ENCODE measurements at regions of chr15 and their contacts with region 1.

Region 1: GRCh38 chr15:74635228-74635627 is 19.6 kb downstream of the CLK3 start:
- DNase-seq: peak; percentile 71
- ATAC-seq: peak; percentile 69

Region 2: GRCh38 chr15:74373731-74374647 is 261.2 kb before region 1 on chr15:
- intact Hi-C with region 1: loop called (anchors 10 kb)
- DNase-seq: peak; percentile 95
- ATAC-seq: peak; percentile 99

Region 3: DNA sequence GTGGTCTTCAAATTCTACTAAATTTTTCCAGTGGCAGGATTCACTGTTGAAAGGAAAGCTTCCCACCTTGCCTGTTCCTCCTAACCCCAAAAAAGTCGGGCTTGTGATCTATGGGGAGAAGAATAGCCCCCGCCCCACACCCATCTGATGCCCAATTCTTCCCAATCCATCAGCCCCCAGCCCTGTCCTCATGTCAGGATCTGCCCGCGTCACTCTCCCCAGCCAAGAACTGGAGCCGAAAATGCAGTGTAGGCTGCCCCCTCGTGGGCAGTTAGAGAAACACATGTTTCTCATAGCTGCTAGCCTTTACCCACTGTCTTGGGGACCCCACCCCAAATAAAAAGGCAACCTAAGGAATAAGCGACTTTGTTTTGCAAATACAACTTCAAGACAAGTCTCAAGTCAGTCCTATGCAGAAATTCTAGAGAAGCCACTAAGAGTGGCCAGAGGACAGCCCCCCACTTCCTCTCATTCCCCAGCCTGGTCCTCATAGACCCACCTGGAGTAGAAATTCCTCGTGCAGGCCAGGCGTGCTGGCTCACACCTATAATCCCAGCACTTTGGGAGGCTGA is 133.6 kb after region 1 on chr15:
- intact Hi-C with region 1: loop called (anchors 5 kb)
- DNase-seq: peak; percentile 70
- ATAC-seq: peak; percentile 54

Measured in left ventricle myocardium superior (tissue), 1 donor.